ENCODE measurements at regions of chr11 and their contacts with region 1.

Region 1: DNA sequence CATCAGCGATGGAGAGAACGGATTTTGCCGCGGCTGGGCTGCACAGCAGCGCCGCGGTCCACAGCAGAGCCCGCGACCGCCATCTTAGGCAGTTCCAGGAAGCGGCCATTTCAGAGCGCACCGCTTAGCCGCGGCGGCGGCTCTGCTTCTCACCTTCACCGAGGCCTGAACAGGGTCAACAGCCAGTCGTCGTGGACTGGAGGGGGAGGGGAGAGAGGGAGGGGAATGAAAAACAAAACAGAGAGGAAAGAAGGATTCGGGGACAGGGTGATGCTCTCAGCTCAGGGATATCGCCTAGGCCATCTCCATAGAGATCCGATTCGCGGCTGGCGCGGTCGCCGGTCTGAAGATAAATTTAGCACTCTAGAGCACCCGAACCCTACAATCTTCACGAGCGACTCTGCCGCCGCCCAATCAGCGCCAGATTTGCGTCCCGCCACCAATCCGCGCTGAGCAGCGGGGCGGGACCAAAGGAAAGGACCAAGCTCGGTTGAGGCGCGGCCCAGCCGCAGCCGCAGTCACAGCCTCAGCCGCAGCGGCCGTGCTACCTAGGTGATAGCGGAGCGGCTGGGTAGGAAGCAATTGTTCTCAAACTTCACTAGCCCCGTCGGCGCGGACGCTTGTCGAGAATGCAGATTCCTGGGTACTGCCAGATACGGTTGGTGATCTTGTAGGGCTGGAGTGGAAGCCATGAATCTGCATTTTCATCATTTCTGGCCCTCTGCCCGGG is at the start of gene ZBED5:
- DNase-seq: peak; percentile 75
- H3K4me3 ChIP-seq: peak within 1 kb of the TSS; percentile 95
- CTCF ChIP-seq: peak; percentile 21

Region 2: GRCh38 chr11:10735481-10736475 is 122.1 kb before region 1 on chr11:
- CTCF ChIA-PET with region 1: no interaction called
- POLR2A ChIA-PET with region 1: no interaction called
- DNase-seq: peak; percentile 87
- H3K4me3 ChIP-seq: peak overlapping the region; percentile 50
- CTCF ChIP-seq: peak; percentile 94

Region 3: GRCh38 chr11:10818594-10818993 is 39.3 kb before region 1 on chr11:
- CTCF ChIA-PET with region 1: no interaction called
- POLR2A ChIA-PET with region 1: interaction called, 13 read pairs
- DNase-seq: peak; percentile 87
- H3K4me3 ChIP-seq: no peak overlapping the region
- CTCF ChIP-seq: no peak

Region 4: DNA sequence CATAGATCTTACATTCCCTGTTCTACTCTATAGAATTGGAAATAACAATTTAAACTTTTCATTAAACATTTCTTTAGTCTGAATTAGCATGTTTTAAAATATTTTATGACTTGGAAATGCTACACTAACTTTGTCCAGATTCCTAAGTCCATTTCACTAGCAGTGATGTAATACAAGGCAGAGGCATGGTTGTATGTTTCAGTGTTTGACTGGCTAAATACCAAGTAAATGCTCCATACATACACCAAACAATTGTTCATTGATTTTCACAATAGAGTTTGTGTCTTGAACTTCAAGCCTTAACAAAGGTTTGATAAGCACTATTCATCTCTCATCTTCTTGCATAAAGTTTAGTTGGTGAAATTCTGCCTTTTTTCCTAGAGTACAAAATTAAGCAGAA is 13.5 kb before region 1 on chr11:
- CTCF ChIA-PET with region 1: interaction called, 4 read pairs
- POLR2A ChIA-PET with region 1: interaction called, 13 read pairs
- DNase-seq: no peak
- H3K4me3 ChIP-seq: no peak overlapping the region
- CTCF ChIP-seq: no peak

Region 5: DNA sequence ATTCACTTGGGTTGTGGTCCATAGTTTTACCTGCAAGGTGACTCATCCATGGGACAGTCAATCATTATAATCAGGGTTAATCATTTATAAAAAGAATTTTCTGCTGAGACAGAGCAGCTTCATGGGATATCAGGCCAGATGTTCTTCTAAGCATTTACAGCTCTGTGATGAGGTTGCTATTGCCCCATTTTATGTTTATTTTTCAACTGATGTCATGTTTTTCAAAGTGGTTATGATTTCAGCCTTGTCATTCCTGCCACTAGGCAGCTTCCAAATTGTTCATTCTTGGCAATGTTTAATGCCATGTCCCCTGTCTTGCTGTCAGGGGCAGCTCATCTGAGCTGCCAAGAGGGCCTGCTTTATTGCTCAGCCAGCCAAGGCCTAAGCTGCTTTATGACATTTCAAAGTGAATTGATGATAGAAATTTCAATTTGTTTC is 35.9 kb after region 1 on chr11:
- CTCF ChIA-PET with region 1: interaction called, 4 read pairs
- POLR2A ChIA-PET with region 1: interaction called, 22 read pairs
- DNase-seq: no peak
- H3K4me3 ChIP-seq: no peak overlapping the region
- CTCF ChIP-seq: peak; percentile 29

Region 6: DNA sequence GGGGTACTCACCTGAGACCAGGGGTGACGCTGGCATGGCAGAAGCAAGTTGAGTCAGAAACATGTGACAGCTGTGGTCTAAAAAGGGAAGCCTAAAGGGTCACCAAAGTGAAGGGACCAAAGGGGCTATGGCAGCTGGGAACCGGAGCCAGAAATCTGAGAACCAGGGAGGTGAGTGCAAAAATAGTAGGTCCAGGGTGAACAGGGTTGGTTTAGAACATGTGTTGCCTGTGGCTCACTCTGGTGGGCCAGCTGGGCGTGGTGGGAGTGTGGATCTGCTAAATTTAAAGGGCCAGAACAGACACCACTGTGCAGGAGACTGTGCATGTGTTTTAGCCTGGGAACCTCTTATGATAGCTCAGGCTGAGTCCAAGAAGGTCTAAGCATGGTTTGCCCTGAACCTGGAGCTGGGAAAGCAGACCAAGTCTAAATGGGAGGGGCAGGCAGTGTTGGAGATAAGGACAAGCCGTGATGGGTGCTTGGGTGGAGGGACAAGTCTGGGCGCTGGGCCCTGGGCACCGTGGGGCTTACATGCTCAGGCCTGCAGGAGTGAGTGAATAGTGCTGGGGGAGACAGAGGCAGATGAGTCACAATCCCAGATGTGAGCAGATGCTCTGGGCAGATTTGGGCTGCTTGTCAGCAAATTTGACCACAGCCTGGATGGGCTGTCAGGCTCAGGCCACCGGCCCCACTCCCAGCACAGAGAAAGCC is 41.4 kb after region 1 on chr11:
- CTCF ChIA-PET with region 1: interaction called, 7 read pairs
- POLR2A ChIA-PET with region 1: interaction called, 22 read pairs
- DNase-seq: no peak
- H3K4me3 ChIP-seq: peak overlapping the region; percentile 35
- CTCF ChIP-seq: no peak

Region 7: DNA sequence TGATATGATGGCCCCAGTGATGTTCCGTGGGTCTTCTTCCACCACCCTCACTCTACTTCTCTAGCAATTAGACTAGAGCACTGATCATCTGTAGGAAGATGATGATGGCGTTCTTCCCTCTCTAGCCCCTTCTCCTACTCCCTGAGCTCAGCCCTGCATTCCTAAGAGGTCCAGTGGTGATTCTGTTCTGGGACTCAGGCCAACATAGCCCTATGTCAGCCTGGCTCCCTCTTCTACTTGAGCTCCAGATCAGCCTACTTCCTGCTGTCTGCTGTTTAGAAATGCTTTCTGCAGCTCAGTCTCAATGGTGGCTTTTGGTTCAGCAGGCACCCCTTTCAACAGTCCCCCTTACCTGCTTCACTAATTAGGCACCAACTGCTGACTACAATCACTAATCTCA is 86.1 kb after region 1 on chr11:
- CTCF ChIA-PET with region 1: no interaction called
- POLR2A ChIA-PET with region 1: no interaction called
- DNase-seq: no peak
- H3K4me3 ChIP-seq: no peak overlapping the region
- CTCF ChIP-seq: no peak

Measured in AG04449 (cell line).